Ovary (tissue), 10 donors: ENCODE measurements at regions of chr17 and their contacts with region 1.

Region 1: GRCh38 chr17:1648963-1649843 is 463 bp downstream of the RILP start:
- DNase-seq: peak; percentile 92 to 97 (median 96)
- H3K4me3 ChIP-seq: peak overlapping the region; percentile 83
- H3K27ac ChIP-seq: peak overlapping the region; percentile 69 to 95
- H3K4me1 ChIP-seq: peaks cover 8% of the 10 kb centered on the region
- H3K27me3 ChIP-seq: no peaks in the 10 kb centered on the region
- CTCF ChIP-seq: peak in 2 of 3 donors; percentile 19 to 80
- EP300 ChIP-seq: no peak
- POLR2A ChIP-seq: peak; percentile 41

Region 2: GRCh38 chr17:1573916-1574696 is 75.1 kb before region 1 on chr17:
- intact Hi-C with region 1: loop called (anchors 1 to 5 kb)
- DNase-seq: peak; percentile 84 to 95 (median 94)
- H3K4me3 ChIP-seq: no peak overlapping the region
- H3K27ac ChIP-seq: peak overlapping the region; percentile 54 to 76
- H3K4me1 ChIP-seq: peaks cover 19% of the 10 kb centered on the region
- H3K27me3 ChIP-seq: no peaks in the 10 kb centered on the region
- CTCF ChIP-seq: peak; percentile 92 to 99 (median 97)
- EP300 ChIP-seq: no peak
- POLR2A ChIP-seq: no peak

Region 3: DNA sequence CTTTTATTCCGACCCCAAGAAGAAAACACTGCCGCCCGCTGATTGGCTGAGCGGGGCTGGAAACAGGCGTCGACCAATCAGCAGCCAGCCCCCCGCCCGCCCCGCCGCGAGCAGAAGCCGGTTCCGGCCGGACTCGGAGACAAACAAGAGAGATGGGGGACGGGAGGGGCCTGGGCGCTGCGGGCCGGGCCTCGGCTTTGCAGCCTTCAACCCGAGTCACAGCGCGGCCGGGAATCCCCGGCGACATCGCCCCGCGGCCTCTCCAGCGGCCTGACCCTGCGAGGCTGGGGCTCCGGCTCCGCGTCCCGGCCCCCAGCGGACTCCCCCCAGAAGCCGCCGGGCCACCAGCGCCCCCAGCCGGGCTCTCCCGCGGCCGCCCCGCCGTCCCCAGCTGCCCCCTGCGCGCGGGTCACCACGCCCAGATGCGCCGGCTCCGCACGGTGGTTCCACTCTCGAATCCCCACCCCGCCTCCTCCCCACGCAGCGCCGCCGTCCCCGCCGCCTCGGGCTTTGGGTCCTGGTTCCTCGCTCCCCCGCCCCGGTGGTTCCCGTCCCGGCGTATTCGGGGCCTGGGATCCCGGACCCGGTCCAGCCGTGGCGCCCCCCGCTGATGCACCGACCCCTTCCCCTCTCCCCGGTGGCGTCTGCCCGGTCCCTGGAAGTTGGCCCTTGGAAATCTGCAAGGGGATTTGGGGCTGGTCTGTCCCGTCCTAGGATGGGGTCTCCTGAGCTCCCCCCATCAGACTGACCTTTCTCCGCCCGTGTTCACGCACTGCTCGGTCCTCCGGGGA is 20.2 kb before region 1 on chr17:
- intact Hi-C with region 1: loop called in 1 of 4 experiments (anchors 2 kb)
- DNase-seq: peak; percentile 91 to 95 (median 93)
- H3K4me3 ChIP-seq: peak overlapping the region; percentile 54
- H3K27ac ChIP-seq: peak overlapping the region; percentile 47 to 81
- H3K4me1 ChIP-seq: peaks cover 3% of the 10 kb centered on the region
- H3K27me3 ChIP-seq: no peaks in the 10 kb centered on the region
- CTCF ChIP-seq: peak; percentile 10 to 55 (median 54)
- EP300 ChIP-seq: no peak
- POLR2A ChIP-seq: peak; percentile 49

Region 4: DNA sequence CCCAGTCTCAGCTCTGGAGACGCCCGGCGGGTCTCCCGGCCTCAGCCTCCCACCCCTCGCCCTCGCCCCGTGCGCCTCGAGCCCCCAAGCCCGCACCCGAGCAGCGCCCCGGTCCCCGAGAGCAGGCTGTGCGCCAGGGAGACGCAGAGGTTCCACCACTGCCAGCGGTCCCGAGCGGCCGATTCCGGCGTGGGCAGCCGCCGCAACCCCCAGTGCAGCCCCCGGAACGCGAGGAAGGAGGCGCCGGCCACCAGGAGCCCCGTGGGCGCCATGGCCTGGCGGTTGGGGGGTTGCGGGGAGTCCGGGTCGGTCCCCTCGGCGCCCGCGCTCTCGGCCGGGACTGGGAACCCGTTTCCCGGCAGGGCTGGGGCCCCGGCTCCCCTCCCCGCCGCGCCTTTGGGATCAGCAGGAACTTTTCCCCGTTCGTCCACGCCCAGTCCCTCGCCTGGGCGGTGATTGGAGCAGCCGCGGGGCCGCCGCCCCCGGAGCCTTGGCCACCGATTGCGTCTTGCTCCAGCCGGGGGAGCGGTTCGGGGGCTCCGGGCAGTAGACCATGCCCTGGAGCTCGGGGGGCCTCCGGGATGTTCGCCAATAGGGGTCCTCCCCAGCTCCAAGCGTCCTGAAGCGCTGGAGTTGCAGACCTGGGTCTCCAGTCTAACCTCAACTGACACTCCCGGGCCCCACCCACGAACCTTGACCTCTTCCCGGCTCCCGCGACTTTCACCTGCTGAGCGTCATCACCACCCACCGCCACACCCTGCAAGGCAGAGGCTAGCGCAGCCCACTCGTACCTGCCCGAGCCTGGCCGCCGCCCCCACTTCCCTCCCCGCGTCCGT is 61.0 kb after region 1 on chr17 and contains the start of gene TLCD2:
- intact Hi-C with region 1: loop called in 1 of 4 experiments (anchors 10 kb)
- DNase-seq: peak; percentile 76 to 85 (median 82)
- H3K4me3 ChIP-seq: peak within 1 kb of the TSS; percentile 83
- H3K27ac ChIP-seq: peak within 1 kb of the TSS; percentile 53 to 77
- H3K4me1 ChIP-seq: peaks cover 15% of the 10 kb centered on the region
- H3K27me3 ChIP-seq: no peaks in the 10 kb centered on the region
- CTCF ChIP-seq: peak in 1 of 3 donors; percentile 9
- EP300 ChIP-seq: no peak
- POLR2A ChIP-seq: peak; percentile 69
- total RNA-seq, gene TLCD2: 1.5 to 9.1 (median 5.6) TPM

Region 5: GRCh38 chr17:1724506-1725362 is 75.5 kb after region 1 on chr17 and contains the start of gene WDR81:
- intact Hi-C with region 1: no loop called
- DNase-seq: peak; percentile 90 to 95 (median 93)
- H3K4me3 ChIP-seq: peak within 1 kb of the TSS; percentile 59
- H3K27ac ChIP-seq: peak within 1 kb of the TSS; percentile 37 to 80
- H3K4me1 ChIP-seq: peaks cover 11% of the 10 kb centered on the region
- H3K27me3 ChIP-seq: no peaks in the 10 kb centered on the region
- CTCF ChIP-seq: no peak
- EP300 ChIP-seq: no peak
- POLR2A ChIP-seq: peak; percentile 25
- total RNA-seq, gene WDR81: 26.7 to 59.4 (median 36.2) TPM

Region 6: GRCh38 chr17:1783834-1784611 is 134.8 kb after region 1 on chr17:
- intact Hi-C with region 1: loop called in 1 of 4 experiments (anchors 10 kb)
- DNase-seq: peak; percentile 81 to 94 (median 84)
- H3K4me3 ChIP-seq: peak overlapping the region; percentile 14
- H3K27ac ChIP-seq: peak overlapping the region; percentile 92 to 94
- H3K4me1 ChIP-seq: peaks cover 29% of the 10 kb centered on the region
- H3K27me3 ChIP-seq: no peaks in the 10 kb centered on the region
- CTCF ChIP-seq: peak; percentile 81 to 97 (median 97)
- EP300 ChIP-seq: peak; percentile 93
- POLR2A ChIP-seq: peak; percentile 68

Region 7: GRCh38 chr17:1796800-1797199 is 147.6 kb after region 1 on chr17:
- intact Hi-C with region 1: no loop called
- DNase-seq: peak in 1 of 5 donors; percentile 13
- H3K4me3 ChIP-seq: no peak overlapping the region
- H3K27ac ChIP-seq: peak overlapping the region in 1 of 2 donors; percentile 42
- H3K4me1 ChIP-seq: no peaks in the 10 kb centered on the region
- H3K27me3 ChIP-seq: no peaks in the 10 kb centered on the region
- CTCF ChIP-seq: no peak
- EP300 ChIP-seq: no peak
- POLR2A ChIP-seq: no peak

Region 8: DNA sequence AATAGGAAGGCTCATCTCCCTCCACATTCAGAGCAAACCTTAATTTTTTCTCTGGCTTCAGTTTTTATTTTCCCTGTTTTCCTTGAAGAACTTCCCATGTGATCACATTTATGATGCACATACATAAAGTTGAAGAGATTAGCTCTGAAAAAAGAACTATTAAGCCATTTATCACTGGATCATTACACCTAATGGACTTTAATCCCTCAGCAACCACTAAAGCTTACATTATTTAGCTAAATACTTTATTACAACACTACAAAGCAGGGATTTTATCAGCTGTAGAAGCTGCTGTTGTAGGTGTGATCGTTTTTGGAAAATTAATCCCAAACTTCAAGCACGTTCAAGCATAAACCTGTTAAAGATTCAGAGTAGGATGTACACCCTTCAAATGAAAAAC is 159.4 kb after region 1 on chr17:
- intact Hi-C with region 1: no loop called
- DNase-seq: no peak
- H3K4me3 ChIP-seq: no peak overlapping the region
- H3K27ac ChIP-seq: no peak overlapping the region
- H3K4me1 ChIP-seq: no peaks in the 10 kb centered on the region
- H3K27me3 ChIP-seq: no peaks in the 10 kb centered on the region
- CTCF ChIP-seq: no peak
- EP300 ChIP-seq: no peak
- POLR2A ChIP-seq: no peak

Region 9: DNA sequence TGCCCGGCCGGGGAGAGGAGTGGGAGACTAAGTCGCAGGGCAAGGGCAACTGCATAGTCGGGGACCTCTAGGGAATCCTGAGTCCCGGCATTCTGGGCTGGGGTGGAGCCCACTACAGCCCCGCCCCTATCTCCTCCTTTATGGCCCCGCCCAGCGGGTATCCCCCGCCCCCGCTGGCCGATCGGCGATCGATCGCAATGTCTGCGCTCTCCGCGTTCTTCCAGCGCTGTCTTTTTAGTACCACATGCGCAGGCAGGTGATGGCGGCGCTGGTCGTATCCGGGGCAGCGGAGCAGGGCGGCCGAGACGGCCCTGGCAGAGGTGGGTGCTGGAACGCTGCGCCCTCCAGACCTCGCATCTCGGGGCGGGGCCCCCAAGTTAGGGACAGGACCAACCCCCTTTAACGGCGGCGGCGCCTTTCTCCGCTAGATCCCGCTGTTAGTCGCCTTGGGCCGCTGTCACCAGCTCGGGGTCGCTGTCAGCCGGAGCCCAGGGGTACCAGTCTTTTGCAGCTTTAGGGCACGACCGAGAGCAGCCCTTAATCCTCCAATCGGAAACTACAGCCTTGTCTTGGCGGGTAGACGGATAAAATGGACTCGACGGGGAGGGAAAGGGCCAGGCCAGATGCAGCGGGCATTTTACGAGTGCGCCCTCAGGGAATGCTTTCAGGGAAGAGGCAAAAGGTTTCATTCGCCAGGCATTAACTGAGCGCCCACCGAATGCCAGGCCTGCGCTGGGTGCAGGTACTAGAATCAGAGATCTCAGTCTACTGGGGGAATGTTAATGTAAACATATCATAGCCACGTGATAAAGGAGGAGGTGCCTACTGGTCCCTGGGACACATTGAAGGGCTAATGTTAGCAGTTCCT is 380.9 kb after region 1 on chr17 and contains the start of gene DPH1:
- intact Hi-C with region 1: loop called in 1 of 4 experiments (anchors 10 kb)
- DNase-seq: peak; percentile 85 to 92 (median 90)
- H3K4me3 ChIP-seq: peak within 1 kb of the TSS; percentile 97
- H3K27ac ChIP-seq: peak within 1 kb of the TSS in 1 of 2 donors; percentile 6
- H3K4me1 ChIP-seq: peaks cover 5% of the 10 kb centered on the region
- H3K27me3 ChIP-seq: no peaks in the 10 kb centered on the region
- CTCF ChIP-seq: peak in 2 of 3 donors; percentile 19 to 24
- EP300 ChIP-seq: no peak
- POLR2A ChIP-seq: peak; percentile 45
- total RNA-seq, gene DPH1: 42.4 to 77.7 (median 46.0) TPM